ENCODE measurements at regions of chr17 and their contacts with region 1.

Region 1: DNA sequence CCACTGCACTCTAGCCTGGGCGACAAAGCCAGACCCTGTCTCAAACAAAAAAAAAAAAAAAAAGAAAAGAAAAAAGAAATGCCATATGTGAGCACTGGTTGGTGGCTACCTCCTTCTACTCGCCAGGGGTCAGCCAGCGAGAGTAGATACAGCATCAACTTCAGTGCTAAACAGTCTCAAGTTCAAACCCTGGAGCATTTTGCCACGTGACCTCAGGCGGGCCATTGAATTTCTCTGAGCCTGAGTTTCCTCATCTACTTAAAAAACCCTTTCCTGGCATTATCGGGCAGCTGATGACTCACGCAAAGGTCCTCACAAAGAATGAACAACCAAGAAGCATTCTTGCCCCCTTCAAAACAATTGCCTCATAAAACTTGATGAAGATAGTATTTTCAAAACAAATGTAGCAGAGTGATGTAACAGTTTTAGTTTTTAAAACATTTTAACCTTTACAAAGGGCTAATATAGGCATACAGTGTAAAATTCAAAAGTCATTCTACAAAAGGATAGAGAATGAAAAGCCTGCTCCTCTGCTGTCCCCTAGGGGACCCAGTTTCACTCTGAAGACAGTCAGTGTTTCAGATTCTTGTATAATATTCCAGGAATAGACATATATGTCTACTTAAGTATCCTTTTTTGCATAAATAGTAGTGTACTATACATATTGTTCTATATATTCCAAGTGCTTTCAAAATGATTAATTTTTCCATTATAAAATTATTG is 28.4 kb downstream of the DNAH2 start:
- DNase-seq: no peak
- H3K4me3 ChIP-seq: no peak overlapping the region
- H3K27ac ChIP-seq: no peak overlapping the region
- H3K4me1 ChIP-seq: no peaks in the 10 kb centered on the region
- H3K27me3 ChIP-seq: no peaks in the 10 kb centered on the region; a peak in 1 of 7 replicates
- CTCF ChIP-seq: no peak
- EP300 ChIP-seq: no peak
- POLR2A ChIP-seq: no peak
- RAD21 ChIP-seq: no peak

Region 2: DNA sequence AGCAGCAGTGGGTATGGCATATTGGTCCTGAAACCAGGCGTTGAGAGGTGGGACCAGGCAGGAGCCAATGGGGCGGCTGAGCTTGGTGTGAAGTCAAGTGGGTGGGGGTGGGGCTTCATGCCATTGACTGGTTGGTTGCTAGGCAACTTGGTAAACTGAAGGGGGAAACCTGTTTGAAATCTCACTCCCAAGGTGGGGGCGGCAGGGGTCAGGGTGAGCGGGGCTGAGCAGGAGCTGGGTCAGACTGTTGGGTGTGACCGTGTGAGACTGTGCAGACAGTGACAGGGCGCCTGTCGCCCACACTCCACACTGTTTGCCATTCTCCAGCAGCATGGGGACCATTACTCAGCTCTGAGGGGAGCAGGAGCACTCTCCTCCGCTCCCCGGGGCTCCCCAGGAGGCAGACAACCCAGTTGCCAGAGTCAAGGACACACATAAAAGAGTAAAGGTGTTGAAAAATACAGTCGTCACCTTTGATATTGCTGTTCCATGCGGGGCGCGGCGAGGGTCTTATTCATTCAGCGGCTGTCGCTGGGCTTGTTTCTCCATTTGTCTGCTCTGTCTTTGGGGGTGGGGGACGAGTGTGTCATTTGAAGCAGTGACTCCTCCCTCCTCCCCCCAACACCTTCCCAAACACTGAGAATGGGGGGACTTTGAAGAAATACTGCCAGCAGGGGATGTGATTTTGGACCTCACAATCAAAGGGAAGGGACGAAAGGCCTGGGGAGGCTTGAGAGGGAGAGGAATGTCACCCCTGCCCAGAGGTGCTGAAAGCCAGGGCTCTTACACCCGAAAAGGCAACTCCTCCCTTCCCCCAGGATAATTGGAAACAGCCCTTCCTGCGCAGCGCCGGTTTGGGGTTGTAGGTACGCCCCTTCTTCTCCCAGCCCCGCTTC is 42.1 kb before region 1 on chr17:
- CTCF ChIA-PET with region 1: no interaction called
- POLR2A ChIA-PET with region 1: no interaction called
- DNase-seq: peak; percentile 61 to 77
- H3K4me3 ChIP-seq: peak overlapping the region; percentile 56 to 86 (median 66); a peak in 5 of 8 replicates
- H3K27ac ChIP-seq: peak overlapping the region; percentile 80; the same call in 1 of the 2 replicates
- H3K4me1 ChIP-seq: peaks cover 2 to 19% (median 16%) of the 10 kb centered on the region in 4 experiments
- H3K27me3 ChIP-seq: peaks cover 0 to 3% (median 1%) of the 10 kb centered on the region in 4 experiments; a peak in 2 of 7 replicates
- CTCF ChIP-seq: no peak
- EP300 ChIP-seq: peak in 1 of 2 experiments; percentile 76; a peak in 1 of 3 replicates
- POLR2A ChIP-seq: peak in 1 of 2 experiments; percentile 29; a peak in 1 of 3 replicates
- RAD21 ChIP-seq: no peak

Region 3: GRCh38 chr17:7763919-7764318 is 18.0 kb after region 1 on chr17:
- CTCF ChIA-PET with region 1: interaction called, 11 read pairs
- POLR2A ChIA-PET with region 1: no interaction called
- DNase-seq: no peak
- H3K4me3 ChIP-seq: no peak overlapping the region
- H3K27ac ChIP-seq: no peak overlapping the region
- H3K4me1 ChIP-seq: no peaks in the 10 kb centered on the region; a peak in 1 of 7 replicates
- H3K27me3 ChIP-seq: no peaks in the 10 kb centered on the region
- CTCF ChIP-seq: no peak
- EP300 ChIP-seq: no peak
- POLR2A ChIP-seq: no peak
- RAD21 ChIP-seq: no peak

Region 4: GRCh38 chr17:7803981-7804380 is 58.1 kb after region 1 on chr17:
- CTCF ChIA-PET with region 1: interaction called, 15 read pairs
- POLR2A ChIA-PET with region 1: no interaction called
- DNase-seq: no peak
- H3K4me3 ChIP-seq: no peak overlapping the region
- H3K27ac ChIP-seq: no peak overlapping the region
- H3K4me1 ChIP-seq: no peaks in the 10 kb centered on the region
- H3K27me3 ChIP-seq: no peaks in the 10 kb centered on the region; a peak in 2 of 7 replicates
- CTCF ChIP-seq: no peak
- EP300 ChIP-seq: no peak
- POLR2A ChIP-seq: no peak
- RAD21 ChIP-seq: no peak

Region 5: GRCh38 chr17:7825206-7825990 is 79.5 kb after region 1 on chr17:
- CTCF ChIA-PET with region 1: interaction called, 71 read pairs
- POLR2A ChIA-PET with region 1: interaction called, 3 read pairs
- DNase-seq: no peak
- H3K4me3 ChIP-seq: no peak overlapping the region
- H3K27ac ChIP-seq: no peak overlapping the region
- H3K4me1 ChIP-seq: peaks cover 0 to 7% (median 5%) of the 10 kb centered on the region in 4 experiments; a peak in 5 of 7 replicates
- H3K27me3 ChIP-seq: peaks cover 0 to 18% (median 12%) of the 10 kb centered on the region in 4 experiments; a peak in 6 of 7 replicates
- CTCF ChIP-seq: peak in 1 of 3 experiments; percentile 17; a peak in 1 of 4 replicates
- EP300 ChIP-seq: no peak
- POLR2A ChIP-seq: no peak
- RAD21 ChIP-seq: no peak

Region 6: GRCh38 chr17:7844292-7845154 is 98.6 kb after region 1 on chr17:
- CTCF ChIA-PET with region 1: interaction called, 25 read pairs
- POLR2A ChIA-PET with region 1: interaction called, 3 read pairs
- DNase-seq: peak in 1 of 2 experiments; percentile 88
- H3K4me3 ChIP-seq: peak overlapping the region; percentile 70 to 98 (median 86)
- H3K27ac ChIP-seq: no peak overlapping the region
- H3K4me1 ChIP-seq: peaks cover 5 to 19% (median 12%) of the 10 kb centered on the region in 4 experiments; a peak in 6 of 7 replicates
- H3K27me3 ChIP-seq: peaks cover 16 to 40% (median 37%) of the 10 kb centered on the region in 4 experiments
- CTCF ChIP-seq: no peak
- EP300 ChIP-seq: no peak
- POLR2A ChIP-seq: peak in 1 of 2 experiments; percentile 20; a peak in 1 of 3 replicates
- RAD21 ChIP-seq: no peak